Activated CD8-positive, alpha-beta memory T cell treated with anti-CD3 and anti-CD28 coated beads, Interleukin-2, amount 10 ng/mL, durations not matched to agents 7 days and 5 days (primary cell): ENCODE measurements at regions of chr15 and their contacts with region 1.

Region 1: DNA sequence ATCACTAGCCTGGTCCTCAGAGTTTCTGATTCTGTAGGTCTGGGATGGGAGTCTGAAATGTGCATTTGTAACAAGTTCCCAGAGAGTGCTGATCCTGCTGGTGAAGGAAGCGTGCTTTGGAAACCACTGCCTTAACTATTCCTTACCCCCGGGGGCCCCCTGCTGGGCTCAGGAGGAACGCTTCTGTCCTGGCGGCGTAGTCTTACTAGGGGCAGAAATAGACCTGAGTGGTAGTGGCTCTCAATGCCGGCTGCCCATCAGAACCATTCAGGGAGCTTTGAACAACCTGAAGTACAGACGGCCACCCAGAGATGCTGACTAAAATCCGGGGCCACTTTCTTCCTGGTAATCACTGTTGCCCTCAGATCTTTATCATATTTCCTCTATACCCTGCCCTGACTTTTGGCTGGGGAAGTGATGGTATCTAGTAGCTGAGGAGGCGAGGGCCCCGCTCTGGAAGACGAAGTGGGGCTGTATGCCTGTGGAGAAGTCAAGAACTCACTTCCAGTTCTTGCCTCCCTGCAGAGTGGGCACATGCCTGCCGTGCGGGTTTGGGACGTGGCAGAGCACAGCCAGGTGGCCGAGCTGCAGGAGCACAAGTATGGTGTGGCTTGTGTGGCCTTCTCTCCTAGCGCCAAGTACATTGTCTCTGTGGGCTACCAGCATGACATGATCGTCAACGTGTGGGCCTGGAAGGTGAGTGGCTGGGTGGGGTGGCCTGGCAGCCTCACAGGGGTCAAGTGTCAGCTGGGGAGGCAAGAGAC is 16.3 kb upstream of the JMJD7 start:
- DNase-seq: peak; percentile 83
- ATAC-seq: peak; percentile 91
- H3K4me3 Mint-ChIP-seq: no peak overlapping the region
- H3K27ac Mint-ChIP-seq: peak overlapping the region; percentile 56
- H3K4me1 Mint-ChIP-seq: peaks cover 25% of the 10 kb centered on the region
- H3K27me3 Mint-ChIP-seq: no peaks in the 10 kb centered on the region

Region 2: GRCh38 chr15:41603941-41604911 is 207.4 kb before region 1 on chr15:
- CTCF ChIA-PET with region 1: interaction called, 11 read pairs
- DNase-seq: peak; percentile 57
- ATAC-seq: peak; percentile 86
- H3K4me3 Mint-ChIP-seq: no peak overlapping the region
- H3K27ac Mint-ChIP-seq: no peak overlapping the region
- H3K4me1 Mint-ChIP-seq: peaks cover 8% of the 10 kb centered on the region
- H3K27me3 Mint-ChIP-seq: peaks cover 31% of the 10 kb centered on the region

Region 3: DNA sequence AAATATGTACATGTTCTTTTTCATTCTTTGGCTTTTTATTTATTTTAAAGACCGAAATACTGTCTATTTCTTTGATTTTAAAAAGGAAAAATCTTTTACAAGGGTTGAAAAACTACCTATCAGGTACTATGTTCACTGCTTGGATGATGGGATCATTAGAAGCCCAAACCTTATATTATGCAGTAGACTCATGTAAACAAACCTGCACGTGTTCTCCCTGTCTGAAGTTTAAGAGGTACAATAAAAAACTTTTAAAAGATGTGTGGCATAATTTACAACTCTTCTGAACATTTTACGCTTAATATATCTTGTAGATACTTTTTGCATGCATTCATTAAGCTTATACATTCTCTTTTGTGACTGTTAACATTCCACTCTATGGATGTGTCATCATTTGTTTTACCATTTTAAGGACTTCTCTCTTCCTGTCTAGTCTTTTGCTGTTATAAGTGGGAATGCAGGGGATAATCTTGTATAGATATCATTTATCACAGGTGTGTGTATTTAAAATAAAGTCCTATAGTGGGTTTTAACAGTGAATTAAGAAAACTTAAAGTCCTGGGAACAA is 145.2 kb before region 1 on chr15:
- CTCF ChIA-PET with region 1: no interaction called
- DNase-seq: no peak
- ATAC-seq: no peak
- H3K4me3 Mint-ChIP-seq: no peak overlapping the region
- H3K27ac Mint-ChIP-seq: no peak overlapping the region
- H3K4me1 Mint-ChIP-seq: peaks cover 20% of the 10 kb centered on the region
- H3K27me3 Mint-ChIP-seq: no peaks in the 10 kb centered on the region

Region 4: GRCh38 chr15:41779662-41780157 is 31.9 kb before region 1 on chr15:
- CTCF ChIA-PET with region 1: interaction called, 247 read pairs
- DNase-seq: no peak
- ATAC-seq: no peak
- H3K4me3 Mint-ChIP-seq: no peak overlapping the region
- H3K27ac Mint-ChIP-seq: peak overlapping the region; percentile 63
- H3K4me1 Mint-ChIP-seq: peaks cover 61% of the 10 kb centered on the region
- H3K27me3 Mint-ChIP-seq: no peaks in the 10 kb centered on the region

Region 5: DNA sequence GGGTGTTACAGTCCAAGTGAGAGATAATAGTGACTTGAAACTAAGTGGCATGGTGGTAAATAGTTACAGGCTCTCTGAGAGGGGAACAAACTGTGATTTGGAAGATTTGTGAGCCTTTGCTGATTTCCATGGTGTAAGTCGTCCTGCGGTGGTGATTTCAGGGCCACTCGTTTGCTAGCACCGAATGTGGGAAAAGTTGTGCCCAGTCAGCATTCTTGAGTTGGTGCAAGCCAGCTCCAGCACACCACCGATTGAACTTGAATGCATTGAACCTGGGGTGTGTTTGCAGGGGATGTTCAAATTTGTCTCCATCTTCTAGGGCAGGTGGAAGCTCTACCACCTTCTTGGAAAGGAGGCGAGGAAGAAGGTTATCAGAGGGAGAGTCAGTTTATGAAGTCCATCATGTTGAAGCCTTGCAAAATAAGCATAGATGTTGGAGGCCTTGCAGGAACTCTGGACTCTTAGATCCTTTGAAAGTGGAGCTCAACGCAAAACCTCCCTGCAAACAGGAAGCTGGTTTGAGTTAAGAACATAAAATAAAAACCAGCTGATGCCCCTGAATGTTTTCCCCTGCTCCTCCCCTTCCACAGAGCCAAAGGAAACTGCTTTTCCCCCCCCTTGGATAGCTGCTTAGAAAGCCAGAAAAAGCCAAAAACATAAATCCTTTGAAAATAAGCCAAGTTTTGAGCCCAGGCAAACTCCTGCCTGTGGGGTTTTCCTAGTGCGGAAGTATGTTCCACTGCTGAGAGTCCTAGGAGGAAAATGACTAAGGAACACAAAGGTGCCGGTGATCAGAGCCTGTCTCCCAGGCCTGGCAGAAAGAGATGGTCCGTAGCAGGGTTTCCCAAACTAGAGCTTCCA is 15.4 kb before region 1 on chr15:
- CTCF ChIA-PET with region 1: interaction called, 47 read pairs
- DNase-seq: no peak
- ATAC-seq: no peak
- H3K4me3 Mint-ChIP-seq: no peak overlapping the region
- H3K27ac Mint-ChIP-seq: no peak overlapping the region
- H3K4me1 Mint-ChIP-seq: peaks cover 16% of the 10 kb centered on the region
- H3K27me3 Mint-ChIP-seq: no peaks in the 10 kb centered on the region

Region 6: GRCh38 chr15:41904541-41905005 is 93.0 kb after region 1 on chr15:
- CTCF ChIA-PET with region 1: interaction called, 25 read pairs
- DNase-seq: peak; percentile 80
- ATAC-seq: peak; percentile 92
- H3K4me3 Mint-ChIP-seq: no peak overlapping the region
- H3K27ac Mint-ChIP-seq: peak overlapping the region; percentile 74
- H3K4me1 Mint-ChIP-seq: peaks cover 18% of the 10 kb centered on the region
- H3K27me3 Mint-ChIP-seq: no peaks in the 10 kb centered on the region